ENCODE measurements at regions of chr19 and their contacts with region 1.

Region 1: DNA sequence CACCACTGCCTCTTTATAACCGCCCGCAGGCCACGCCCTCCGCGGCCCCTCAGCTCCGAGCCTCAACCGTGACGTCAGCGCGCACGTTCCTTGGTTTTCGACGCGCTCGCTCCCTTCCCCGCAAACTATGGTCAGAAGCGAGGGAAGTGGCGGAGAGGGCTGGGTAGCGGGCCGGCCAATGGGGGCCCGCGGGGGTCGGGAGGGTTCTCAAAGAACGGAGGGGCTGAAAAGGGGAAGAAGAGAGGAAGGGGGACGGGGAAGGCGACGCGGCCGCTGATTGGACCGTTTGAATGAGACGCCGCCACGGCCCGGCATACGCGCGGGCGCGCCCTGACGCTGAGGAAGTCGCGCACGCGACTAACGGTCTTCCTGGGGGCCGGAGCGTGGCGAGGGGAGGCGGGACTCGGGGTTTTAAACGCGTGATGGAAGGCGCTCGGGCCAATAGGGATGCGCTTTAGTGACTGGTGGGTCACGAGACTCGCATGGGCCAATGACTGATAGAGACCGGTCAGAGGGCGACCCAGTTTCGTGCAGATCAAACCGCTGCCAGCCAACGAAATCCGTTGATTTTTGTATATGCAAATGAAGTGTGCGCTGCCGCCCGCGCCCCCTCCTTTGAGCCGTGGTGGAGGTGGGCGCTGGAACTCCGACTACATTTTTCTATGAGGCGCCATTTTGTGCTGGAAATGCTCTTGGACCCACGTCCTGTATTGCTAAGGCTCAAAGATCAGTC is 378 bp upstream of the UBE2S start:
- H3K4me3 ChIP-seq: peak overlapping the region; percentile 96
- H3K27ac ChIP-seq: peak overlapping the region; percentile 99
- H3K4me1 ChIP-seq: peaks cover 9% of the 10 kb centered on the region
- CTCF ChIP-seq: no peak

Region 2: DNA sequence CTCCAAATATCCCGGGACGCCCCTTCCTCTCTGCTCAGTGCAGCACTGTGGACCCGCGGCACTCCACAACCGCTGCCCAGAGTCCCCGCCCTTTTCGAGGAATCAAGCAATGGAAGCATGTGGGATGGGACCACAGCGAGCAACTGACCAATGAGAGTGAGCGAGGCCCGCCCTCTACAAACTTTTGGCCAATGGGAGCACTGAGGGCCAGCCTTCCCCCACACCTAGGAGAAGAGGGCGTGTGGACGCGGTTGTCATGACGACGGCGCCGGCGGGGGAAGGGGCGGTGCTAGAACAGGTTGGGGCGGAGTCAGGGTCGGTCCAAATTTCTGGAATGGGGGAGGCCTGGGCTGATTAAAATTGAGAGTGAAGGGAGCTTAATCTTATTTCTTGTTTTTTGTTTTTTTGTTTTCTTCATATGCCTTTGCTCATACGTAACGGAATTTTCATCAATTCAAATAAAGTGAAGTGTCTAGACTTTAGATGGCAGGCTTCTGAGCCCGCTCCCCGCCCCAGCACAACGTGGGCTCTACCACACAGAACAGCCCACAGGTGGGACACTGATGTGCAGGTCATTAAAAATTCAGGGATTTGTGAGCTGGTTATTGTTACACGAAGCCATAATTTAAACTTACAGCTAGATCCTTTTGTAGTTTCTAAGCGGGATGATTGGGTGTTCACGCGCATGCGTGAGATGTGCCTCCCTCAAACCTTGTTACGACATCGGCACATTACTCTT is 241.3 kb before region 1 on chr19 and contains the start of gene DNAAF3:
- CTCF ChIA-PET with region 1: interaction called, 4 read pairs
- POLR2A ChIA-PET with region 1: interaction called, 21 read pairs
- H3K4me3 ChIP-seq: peak within 1 kb of the TSS; percentile 67
- H3K27ac ChIP-seq: peak within 1 kb of the TSS; percentile 54
- H3K4me1 ChIP-seq: peaks cover 2% of the 10 kb centered on the region; the same call in 1 of the 2 replicates
- CTCF ChIP-seq: peak; percentile 17; the same call in 1 of the 2 replicates

Region 3: GRCh38 chr19:55279770-55280643 is 128.0 kb before region 1 on chr19 and contains the start of gene HSPBP1:
- CTCF ChIA-PET with region 1: no interaction called
- POLR2A ChIA-PET with region 1: interaction called, 27 read pairs
- H3K4me3 ChIP-seq: peak within 1 kb of the TSS; percentile 97
- H3K27ac ChIP-seq: peak within 1 kb of the TSS; percentile 57
- H3K4me1 ChIP-seq: peaks cover 12% of the 10 kb centered on the region
- CTCF ChIP-seq: no peak

Region 4: DNA sequence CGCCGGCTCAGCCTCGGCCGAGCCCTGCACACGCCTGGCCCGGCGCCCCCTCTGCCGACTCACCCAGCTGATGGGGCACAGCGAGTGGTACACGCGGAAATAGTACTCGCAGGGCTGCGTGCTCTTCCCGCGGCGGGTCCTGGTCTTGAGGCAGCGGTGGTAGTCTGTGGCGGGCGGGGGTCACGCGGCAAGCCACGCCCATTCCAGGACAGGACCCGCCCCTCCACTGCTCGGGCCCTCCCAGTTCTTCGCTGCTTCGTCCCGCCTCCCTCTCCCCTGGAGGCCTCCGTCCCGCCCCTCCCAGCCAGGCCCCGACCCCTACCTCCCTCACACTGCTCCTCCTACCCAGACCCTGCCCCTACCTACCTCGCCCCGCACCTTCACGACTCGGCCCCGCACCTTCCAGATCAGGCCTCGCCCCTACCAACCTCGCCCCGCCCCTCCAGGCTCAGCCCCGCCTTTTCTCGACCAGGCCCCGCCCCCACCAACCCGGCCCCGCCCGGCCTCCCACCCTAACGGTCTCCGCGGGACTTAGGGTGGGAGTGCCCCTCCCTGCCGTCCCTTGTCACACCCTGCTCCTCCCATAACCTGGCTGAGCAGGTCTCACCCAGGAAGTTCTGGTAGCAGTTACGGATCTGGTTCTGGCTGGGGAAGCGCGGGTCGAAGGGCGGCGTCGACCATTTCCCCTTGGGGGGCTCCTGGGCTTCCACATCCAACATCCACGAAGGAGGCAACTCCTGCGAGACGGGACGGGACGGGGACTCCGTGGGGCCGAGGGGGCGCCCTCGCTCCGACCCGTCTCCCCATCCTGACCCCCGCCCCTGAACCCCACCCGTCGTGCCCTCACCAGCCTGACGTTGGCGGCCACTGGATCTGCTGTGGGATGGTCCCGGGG is 53.9 kb before region 1 on chr19:
- CTCF ChIA-PET with region 1: interaction called, 3 read pairs
- POLR2A ChIA-PET with region 1: interaction called, 13 read pairs
- H3K4me3 ChIP-seq: peak overlapping the region; percentile 54
- H3K27ac ChIP-seq: no peak overlapping the region
- H3K4me1 ChIP-seq: peaks cover 8% of the 10 kb centered on the region; the same call in 1 of the 2 replicates
- CTCF ChIP-seq: no peak

Region 5: DNA sequence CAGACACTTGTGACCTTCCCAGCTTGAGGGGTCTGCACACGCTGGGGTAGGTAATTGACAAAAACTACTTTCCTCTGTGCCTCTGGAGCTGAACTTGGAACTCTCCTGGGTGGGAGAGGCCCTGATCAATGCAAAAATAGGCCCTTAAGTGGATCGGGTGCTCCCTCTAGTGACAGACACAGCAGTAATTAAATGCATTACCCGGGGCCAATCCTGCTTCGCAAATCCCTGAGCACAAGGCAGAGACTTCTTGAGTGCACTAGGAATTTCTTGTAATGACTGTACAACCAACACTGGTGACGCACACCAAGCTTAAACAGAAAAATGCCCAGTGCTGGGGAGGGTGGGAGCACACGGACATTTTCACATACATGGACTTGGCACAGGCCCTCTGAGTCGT is 10.2 kb after region 1 on chr19:
- CTCF ChIA-PET with region 1: interaction called, 16 read pairs
- POLR2A ChIA-PET with region 1: interaction called, 11 read pairs
- H3K4me3 ChIP-seq: no peak overlapping the region
- H3K27ac ChIP-seq: no peak overlapping the region
- H3K4me1 ChIP-seq: no peaks in the 10 kb centered on the region
- CTCF ChIP-seq: peak; percentile 61

Region 6: DNA sequence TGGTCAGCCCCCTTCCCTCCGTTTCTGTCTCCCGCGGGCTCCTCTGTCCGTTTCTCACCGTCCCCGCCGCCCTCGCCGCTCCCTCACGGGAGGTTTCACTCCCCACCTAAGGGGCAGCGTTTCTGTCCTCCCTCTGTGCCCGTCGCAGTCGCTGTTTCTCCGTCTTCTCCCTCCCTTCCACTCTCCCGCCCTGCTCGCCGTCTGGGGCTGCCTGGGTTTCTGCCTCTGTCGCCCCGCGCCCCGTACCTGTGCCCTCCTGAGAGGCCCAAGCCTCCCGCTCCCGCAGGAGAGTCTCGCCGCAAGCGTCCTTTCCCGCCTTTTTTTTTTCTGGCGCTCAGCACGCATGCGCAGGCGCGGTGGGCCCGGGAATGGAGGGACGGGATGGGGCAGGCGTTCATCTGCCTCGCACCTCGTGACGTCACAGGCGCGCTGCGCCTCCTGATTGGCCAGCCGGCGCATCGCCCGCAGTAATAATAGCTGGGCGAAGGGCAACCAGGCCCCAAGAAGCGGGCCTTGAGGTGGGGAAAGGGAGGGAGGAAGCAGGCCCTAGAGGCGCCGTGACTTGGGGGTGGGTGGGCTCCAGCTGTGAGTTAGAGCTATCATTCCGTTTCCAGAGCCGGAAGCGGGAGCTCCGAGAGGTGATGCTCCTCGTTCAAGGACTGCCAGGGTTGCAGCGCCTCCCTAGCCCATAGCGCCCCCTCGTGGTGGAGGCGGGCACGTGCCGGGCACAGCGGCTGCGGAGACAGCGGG is 95.7 kb after region 1 on chr19:
- CTCF ChIA-PET with region 1: interaction called, 3 read pairs
- POLR2A ChIA-PET with region 1: interaction called, 16 read pairs
- H3K4me3 ChIP-seq: peak overlapping the region; percentile 50
- H3K27ac ChIP-seq: peak overlapping the region; percentile 33; the same call in 1 of the 2 replicates
- H3K4me1 ChIP-seq: no peaks in the 10 kb centered on the region
- CTCF ChIP-seq: peak; percentile 97